Activated naive CD4-positive, alpha-beta T cell treated with anti-CD3 and anti-CD28 coated beads for 36 hours (primary cell): ENCODE measurements at regions of chr13 and their contacts with region 1.

Region 1: DNA sequence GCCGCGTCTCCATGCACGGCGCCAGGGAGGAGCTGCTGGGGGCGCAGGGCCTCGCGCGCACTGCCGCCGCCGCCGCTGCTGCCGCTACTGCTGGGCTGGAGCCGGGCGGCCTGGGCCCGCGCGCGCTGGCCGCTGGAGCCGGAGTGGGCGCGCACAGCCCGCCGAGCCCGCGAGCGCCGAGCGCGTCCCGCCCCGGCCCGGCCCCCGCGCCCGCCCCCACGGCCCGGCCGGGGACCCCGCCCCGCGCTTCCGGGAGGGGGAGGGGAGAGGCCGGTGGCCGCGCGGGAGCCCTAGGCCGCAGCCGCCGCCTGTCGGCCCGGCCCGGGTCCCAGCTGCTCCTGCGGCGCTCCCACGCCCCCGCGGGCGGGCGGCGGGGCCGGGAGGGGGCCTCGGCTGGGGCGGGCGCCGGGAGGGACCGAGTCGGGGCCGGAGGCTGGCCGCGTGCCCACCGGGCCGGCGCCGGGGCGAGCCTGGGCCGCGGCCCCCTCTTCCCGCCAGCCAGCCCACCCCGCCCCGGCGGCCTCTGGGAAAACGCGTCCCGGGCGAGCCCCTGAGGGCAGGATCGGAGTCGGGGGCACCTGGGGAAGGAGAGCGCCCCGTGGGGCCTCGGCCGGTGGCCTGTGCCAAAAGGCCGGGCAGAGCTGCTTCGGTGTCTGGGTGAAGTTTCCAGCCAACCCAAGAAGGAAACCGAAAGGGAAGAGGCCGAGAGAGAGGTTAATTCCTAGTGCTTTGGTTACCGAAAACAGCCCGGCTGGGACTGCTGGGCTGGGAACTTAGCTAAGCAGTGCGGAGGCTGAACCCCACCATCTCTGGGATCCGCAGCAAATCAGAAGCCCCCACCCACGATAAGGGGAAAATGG is at the start of gene STK24:
- DNase-seq: peak; percentile 46
- H3K4me3 Mint-ChIP-seq: peak within 1 kb of the TSS; percentile 84
- H3K27ac Mint-ChIP-seq: peak within 1 kb of the TSS; percentile 88
- H3K4me1 Mint-ChIP-seq: peaks cover 35% of the 10 kb centered on the region
- H3K27me3 Mint-ChIP-seq: no peaks in the 10 kb centered on the region
- total RNA-seq, gene STK24: 95.5 to 96.7 TPM

Region 2: DNA sequence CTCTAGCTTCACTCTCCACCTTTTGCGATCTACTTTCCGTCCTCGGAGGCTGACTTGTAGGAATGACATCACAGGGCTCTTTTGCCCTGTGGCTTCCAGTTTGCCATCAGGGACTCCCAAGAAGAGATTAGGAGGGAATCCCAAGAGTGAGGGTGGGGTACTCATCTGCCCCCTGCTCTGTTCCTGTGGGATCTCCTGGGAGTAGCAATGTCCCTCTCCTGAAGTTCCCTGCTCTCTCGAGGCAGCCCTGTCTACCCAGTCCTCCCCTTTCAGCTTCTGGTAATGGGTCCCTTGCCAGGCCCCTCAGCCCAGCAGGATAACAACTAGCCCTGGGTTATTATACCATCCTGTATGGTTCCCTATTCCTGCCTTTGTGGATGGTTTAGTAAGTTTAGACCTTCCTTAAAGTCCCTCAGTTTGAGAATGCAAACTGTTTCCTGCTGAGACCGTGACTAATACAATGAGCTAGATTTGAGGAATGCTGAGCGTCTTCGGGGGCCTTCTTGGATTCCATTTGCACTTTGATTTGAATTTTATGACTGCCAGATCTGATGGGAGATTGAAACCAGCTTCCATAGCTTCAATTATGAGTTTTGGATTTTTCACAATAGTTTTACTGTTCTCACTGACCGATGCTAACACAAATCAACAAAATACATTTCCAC is 697.4 kb before region 1 on chr13:
- CTCF ChIA-PET with region 1: no interaction called
- intact Hi-C with region 1: no loop called
- DNase-seq: no peak
- H3K4me3 Mint-ChIP-seq: no peak overlapping the region
- H3K27ac Mint-ChIP-seq: no peak overlapping the region
- H3K4me1 Mint-ChIP-seq: no peaks in the 10 kb centered on the region
- H3K27me3 Mint-ChIP-seq: peaks cover 22% of the 10 kb centered on the region

Region 3: GRCh38 chr13:97975848-97976609 is 601.2 kb before region 1 on chr13:
- CTCF ChIA-PET with region 1: no interaction called
- intact Hi-C with region 1: loop called (anchors 2 kb)
- DNase-seq: peak; percentile 89
- H3K4me3 Mint-ChIP-seq: peak overlapping the region; percentile 92
- H3K27ac Mint-ChIP-seq: peak overlapping the region; percentile 97
- H3K4me1 Mint-ChIP-seq: peaks cover 28% of the 10 kb centered on the region
- H3K27me3 Mint-ChIP-seq: no peaks in the 10 kb centered on the region

Region 4: GRCh38 chr13:98495627-98496478 is 81.3 kb before region 1 on chr13:
- CTCF ChIA-PET with region 1: no interaction called
- intact Hi-C with region 1: no loop called
- DNase-seq: no peak
- H3K4me3 Mint-ChIP-seq: no peak overlapping the region
- H3K27ac Mint-ChIP-seq: no peak overlapping the region
- H3K4me1 Mint-ChIP-seq: peaks cover 68% of the 10 kb centered on the region
- H3K27me3 Mint-ChIP-seq: no peaks in the 10 kb centered on the region

Region 5: GRCh38 chr13:98509271-98510155 is 67.7 kb before region 1 on chr13:
- CTCF ChIA-PET with region 1: no interaction called
- intact Hi-C with region 1: loop called (anchors 1 kb)
- DNase-seq: peak; percentile 69
- H3K4me3 Mint-ChIP-seq: peak overlapping the region; percentile 29
- H3K27ac Mint-ChIP-seq: peak overlapping the region; percentile 77
- H3K4me1 Mint-ChIP-seq: peaks cover 94% of the 10 kb centered on the region
- H3K27me3 Mint-ChIP-seq: no peaks in the 10 kb centered on the region

Region 6: DNA sequence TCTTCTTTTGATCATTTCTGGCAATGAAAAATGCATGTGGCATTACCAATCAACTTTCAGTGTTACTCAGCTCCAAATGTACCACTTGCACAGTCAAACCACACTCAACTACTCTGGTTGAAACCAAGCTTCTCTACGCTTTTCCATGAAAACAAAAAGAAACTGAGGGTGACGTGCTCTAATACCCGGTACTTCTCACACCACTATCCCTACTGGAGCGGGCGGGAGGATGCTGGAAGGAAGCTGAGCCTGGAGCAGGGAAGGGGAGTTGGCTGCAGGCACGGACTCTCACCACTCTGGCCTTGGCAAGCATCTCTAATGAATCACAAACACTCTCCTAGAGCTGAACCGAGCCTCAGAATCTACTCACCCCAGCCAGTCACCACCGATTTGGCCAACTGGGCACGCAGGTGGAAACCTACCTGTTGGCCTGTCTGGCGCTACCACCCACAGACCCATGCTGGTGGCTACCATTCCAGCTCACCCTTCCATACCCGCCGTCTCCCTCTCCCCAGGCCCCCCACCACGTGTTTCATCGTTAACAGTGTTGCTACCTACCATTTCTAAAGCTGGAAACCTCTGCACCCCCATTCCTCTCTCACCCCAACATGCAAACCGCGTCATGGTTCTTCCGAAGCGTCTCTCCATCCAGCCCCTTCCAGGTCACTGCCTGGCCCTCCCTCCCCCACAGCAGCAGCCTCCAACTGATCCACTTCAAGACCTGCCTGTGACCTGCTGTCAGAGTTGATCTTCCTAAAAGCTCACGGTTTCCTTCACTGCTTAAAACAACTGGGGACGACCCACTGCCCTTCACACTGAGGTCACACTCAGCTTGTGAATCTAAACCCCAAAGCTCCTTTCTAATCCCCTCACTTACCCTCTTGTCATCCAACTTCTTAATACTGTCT is 48.3 kb before region 1 on chr13:
- CTCF ChIA-PET with region 1: no interaction called
- intact Hi-C with region 1: loop called (anchors 1 kb)
- DNase-seq: peak; percentile 43
- H3K4me3 Mint-ChIP-seq: no peak overlapping the region
- H3K27ac Mint-ChIP-seq: peak overlapping the region; percentile 75
- H3K4me1 Mint-ChIP-seq: peaks cover 91% of the 10 kb centered on the region
- H3K27me3 Mint-ChIP-seq: no peaks in the 10 kb centered on the region

Region 7: GRCh38 chr13:98549728-98550317 is 27.4 kb before region 1 on chr13:
- CTCF ChIA-PET with region 1: interaction called, 4 read pairs
- intact Hi-C with region 1: loop called (anchors 1 kb)
- DNase-seq: no peak
- H3K4me3 Mint-ChIP-seq: no peak overlapping the region
- H3K27ac Mint-ChIP-seq: peak overlapping the region; percentile 59
- H3K4me1 Mint-ChIP-seq: peaks cover 80% of the 10 kb centered on the region
- H3K27me3 Mint-ChIP-seq: no peaks in the 10 kb centered on the region

Region 8: DNA sequence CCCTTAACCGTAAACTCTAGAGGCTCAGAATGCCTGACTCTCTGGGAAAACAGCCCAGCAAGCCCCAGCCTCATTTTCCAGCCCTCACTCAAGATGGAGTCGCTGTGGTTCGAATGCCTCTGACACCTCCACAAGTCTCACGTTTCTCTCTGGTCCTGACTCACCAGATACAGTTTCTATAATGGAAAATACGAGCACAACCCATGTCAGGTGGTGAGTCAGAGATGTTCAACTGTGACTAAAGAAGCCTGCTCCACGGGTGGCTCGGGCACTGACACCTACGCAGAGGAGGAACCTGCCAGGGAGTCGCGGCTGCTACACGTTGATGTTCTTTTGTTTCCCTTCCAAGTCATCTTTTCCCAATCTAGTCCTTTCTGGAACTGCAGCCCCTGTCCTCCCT is 86.8 kb after region 1 on chr13:
- CTCF ChIA-PET with region 1: no interaction called
- intact Hi-C with region 1: loop called (anchors 1 kb)
- DNase-seq: peak; percentile 85
- H3K4me3 Mint-ChIP-seq: no peak overlapping the region
- H3K27ac Mint-ChIP-seq: peak overlapping the region; percentile 44
- H3K4me1 Mint-ChIP-seq: peaks cover 19% of the 10 kb centered on the region
- H3K27me3 Mint-ChIP-seq: no peaks in the 10 kb centered on the region

Region 9: DNA sequence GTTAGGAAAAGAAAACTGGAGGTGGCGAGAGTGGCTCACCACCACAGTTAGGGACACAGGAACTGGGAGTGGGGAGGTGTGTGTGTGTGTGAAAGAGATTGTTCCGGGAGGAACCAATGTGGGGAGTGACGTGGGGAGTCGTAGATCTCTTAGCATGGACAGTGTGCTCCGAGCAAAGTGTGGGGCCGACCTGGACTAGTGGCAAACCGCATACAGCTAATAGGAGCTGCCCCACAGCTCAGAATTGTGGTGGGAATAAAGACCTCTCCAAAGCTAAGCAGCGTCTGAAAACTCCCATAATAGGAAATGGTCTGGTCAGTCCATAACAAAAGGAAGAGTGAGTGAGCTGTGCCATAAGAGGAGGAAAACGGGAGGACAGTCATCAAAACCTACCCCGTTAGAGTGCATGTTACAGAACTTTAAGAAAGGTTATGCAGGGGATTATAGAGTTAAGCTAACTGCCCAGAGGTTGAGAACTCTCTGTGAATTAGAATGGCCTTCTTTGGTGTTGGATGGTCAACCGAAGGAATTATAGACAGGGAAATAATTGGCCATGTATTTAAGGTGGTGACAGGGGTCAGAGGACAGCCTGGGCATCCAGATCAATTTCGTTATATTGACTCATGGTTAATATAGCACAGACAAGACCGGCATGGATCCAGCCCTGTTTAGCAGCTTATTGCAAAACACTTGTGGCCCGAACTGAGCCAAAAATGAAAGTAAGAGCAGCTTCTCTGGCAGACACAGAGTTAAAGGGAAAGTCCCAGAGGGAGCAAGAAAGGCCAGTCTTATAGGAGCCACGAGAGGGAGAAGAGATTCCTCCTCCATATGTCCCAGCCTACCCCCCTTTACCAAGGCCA is 184.2 kb after region 1 on chr13:
- CTCF ChIA-PET with region 1: no interaction called
- intact Hi-C with region 1: no loop called
- DNase-seq: no peak
- H3K4me3 Mint-ChIP-seq: no peak overlapping the region
- H3K27ac Mint-ChIP-seq: no peak overlapping the region
- H3K4me1 Mint-ChIP-seq: no peaks in the 10 kb centered on the region
- H3K27me3 Mint-ChIP-seq: peaks cover 2% of the 10 kb centered on the region